ENCODE measurements at regions of chr5 and their contacts with region 1.

Region 1: DNA sequence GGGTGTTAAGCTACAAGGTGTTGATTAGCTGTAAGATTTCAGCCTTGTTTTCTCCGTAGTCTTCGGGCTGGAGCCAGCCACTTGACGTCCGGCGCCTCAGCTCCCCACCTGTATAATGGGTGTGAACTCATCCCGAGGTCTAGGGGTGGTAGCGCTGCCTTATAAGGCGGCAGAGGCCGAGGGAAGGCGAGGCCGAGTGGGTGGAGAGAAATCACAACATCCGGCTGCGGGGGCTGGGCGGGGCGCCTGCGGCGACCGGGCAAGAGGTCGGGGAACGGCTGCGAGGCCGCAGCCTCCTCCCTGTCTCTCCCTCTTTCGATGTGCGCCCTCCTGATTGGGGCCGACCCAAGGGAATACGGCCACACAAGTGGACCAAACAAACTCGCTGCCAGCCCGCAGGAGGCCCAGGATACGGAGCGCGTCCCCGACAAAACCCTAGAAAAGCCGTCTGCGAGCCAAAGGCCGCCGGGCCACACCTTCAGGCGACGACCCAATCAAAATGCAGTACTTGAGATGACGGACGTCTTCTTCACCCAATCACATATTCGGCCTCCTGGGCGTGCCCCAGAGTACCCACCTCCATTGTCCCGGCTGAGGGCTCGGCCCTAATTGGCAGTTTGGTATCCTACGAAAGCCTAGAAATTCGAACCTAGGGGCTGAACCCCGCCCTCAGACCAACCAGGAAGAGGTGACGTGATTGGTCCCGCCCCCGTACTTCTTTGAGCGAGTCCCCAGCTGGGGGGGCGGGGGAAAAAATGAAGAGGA is 493 bp upstream of the GRK6 start:
- DNase-seq: peak; percentile 99 to 100
- ATAC-seq: peak; percentile 82 to 95
- H3K4me3 ChIP-seq: peak overlapping the region; percentile 44
- H3K27ac ChIP-seq: peak overlapping the region; percentile 82 to 87
- H3K4me1 ChIP-seq: peaks cover 17% of the 10 kb centered on the region
- CTCF ChIP-seq: no peak
- EP300 ChIP-seq: no peak
- POLR2A ChIP-seq: no peak; the same call in none of the 2 replicates
- RAD21 ChIP-seq: no peak

Region 2: DNA sequence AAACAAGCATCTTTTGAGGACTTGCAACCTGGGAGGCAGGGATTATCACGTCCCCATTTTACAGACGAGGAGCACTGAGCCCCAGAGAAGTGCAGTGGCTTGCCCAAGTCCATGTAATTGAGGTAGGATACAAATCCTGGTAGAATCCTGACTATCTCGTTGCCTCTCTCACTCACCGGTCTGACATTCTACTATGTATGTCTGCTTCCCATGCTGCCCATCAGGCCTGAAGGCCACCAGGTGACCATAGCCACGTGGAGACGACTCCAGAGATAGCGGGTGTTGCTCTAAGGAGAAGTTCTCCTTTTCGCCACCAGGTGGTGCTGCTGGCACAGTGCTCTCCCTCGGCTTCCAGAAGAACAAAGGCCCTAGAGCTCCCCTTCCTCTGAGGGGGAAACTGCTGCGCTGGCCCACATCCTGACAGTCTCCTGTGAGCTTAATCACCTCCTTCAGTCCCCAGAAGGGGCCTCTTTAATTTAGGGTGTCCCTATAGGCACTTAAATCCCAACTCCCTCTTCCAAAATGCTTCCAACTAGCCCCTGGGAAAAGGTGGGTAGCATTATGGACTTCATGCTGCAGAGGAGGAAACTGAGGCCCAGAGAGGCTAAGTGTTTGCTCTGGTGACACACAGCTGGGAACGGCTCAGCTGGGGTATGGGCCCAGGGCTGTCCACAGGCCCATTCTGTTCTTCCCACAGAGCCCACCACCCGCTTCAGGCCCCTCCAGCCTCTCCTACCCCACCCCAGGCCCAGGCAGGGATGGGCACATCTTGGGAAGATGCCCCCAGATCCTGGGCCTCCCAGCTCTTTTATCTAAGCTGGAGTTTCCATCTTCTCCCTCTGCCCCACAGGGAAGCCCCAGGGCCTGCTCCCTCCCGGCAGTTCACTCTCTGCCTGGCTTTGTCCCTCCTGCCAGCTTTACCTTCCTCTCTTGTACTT is 35.4 kb before region 1 on chr5:
- CTCF ChIA-PET with region 1: interaction called, 19 read pairs
- POLR2A ChIA-PET with region 1: no interaction called
- DNase-seq: peak; percentile 87 to 98
- ATAC-seq: peak; percentile 81 to 94
- H3K4me3 ChIP-seq: no peak overlapping the region
- H3K27ac ChIP-seq: peak overlapping the region; percentile 44 to 72; a peak in 5 of 6 replicates
- H3K4me1 ChIP-seq: peaks cover 18% of the 10 kb centered on the region
- CTCF ChIP-seq: peak; percentile 97
- EP300 ChIP-seq: no peak
- POLR2A ChIP-seq: no peak
- RAD21 ChIP-seq: peak; percentile 89 to 92

Region 3: DNA sequence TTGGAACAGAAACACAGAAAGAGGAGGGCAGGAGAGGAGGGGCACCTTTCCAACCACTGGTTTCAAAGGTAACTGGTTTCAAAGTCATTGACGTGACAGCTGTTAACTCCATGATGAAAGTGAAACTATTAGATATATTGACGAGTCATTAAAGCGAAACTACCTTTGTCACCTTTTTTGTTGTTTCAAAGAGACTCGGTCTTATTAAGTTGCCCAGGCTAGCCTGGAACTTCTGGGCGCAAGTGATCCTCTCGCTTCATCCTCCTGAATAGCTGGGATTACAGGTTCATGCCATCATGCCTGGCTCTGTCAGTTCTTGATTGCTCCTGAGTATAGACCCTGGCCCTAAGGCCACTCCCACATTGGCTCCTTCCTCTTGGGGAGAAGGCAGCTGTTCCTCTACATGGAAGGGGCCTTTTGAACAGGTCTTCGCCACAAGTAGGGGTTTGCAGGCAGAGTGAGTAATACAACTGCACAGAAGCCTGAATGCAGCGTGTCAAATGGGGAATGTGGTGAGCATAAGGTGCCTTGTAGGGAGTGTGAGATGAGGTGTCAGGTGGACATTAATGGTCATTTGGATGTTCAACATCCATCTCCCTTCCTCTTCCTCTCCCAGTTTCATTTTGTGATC is 13.3 kb before region 1 on chr5:
- CTCF ChIA-PET with region 1: interaction called, 8 read pairs
- POLR2A ChIA-PET with region 1: interaction called, 13 read pairs
- DNase-seq: no peak
- ATAC-seq: no peak
- H3K4me3 ChIP-seq: no peak overlapping the region
- H3K27ac ChIP-seq: no peak overlapping the region
- H3K4me1 ChIP-seq: no peaks in the 10 kb centered on the region
- CTCF ChIP-seq: no peak
- EP300 ChIP-seq: no peak
- POLR2A ChIP-seq: no peak
- RAD21 ChIP-seq: no peak

Region 4: GRCh38 chr5:177440211-177440971 is 14.4 kb after region 1 on chr5:
- CTCF ChIA-PET with region 1: interaction called, 871 read pairs
- POLR2A ChIA-PET with region 1: interaction called, 41 read pairs
- DNase-seq: no peak
- ATAC-seq: 0 out of 6 replicates have a peak, but pooled peaks of 1 of the 2 experiments have one; percentile 4
- H3K4me3 ChIP-seq: no peak overlapping the region
- H3K27ac ChIP-seq: no peak overlapping the region
- H3K4me1 ChIP-seq: no peaks in the 10 kb centered on the region
- CTCF ChIP-seq: no peak
- EP300 ChIP-seq: no peak
- POLR2A ChIP-seq: no peak
- RAD21 ChIP-seq: no peak

Region 5: GRCh38 chr5:177446200-177447065 is 20.4 kb after region 1 on chr5 and contains the start of gene PRR7:
- CTCF ChIA-PET with region 1: interaction called, 871 read pairs
- POLR2A ChIA-PET with region 1: interaction called, 41 read pairs
- DNase-seq: peak; percentile 73 to 85
- ATAC-seq: peak; percentile 39 to 43
- H3K4me3 ChIP-seq: peak within 1 kb of the TSS; percentile 86
- H3K27ac ChIP-seq: peak within 1 kb of the TSS; percentile 95 to 98
- H3K4me1 ChIP-seq: peaks cover 21% of the 10 kb centered on the region
- CTCF ChIP-seq: no peak
- EP300 ChIP-seq: no peak
- POLR2A ChIP-seq: peak; percentile 18; the same call in 1 of the 2 replicates
- RAD21 ChIP-seq: no peak
- polyA plus RNA-seq, gene PRR7: 1.8 and 2.2 TPM in 2 replicates

Measured in A549 (cell line).